ENCODE measurements at regions of chr17 and their contacts with region 1.

Region 1: GRCh38 chr17:43673516-43674323 is 12.0 kb upstream of the MEOX1 start:
- H3K4me3 ChIP-seq: no peak overlapping the region
- H3K27ac ChIP-seq: no peak overlapping the region
- H3K4me1 ChIP-seq: peaks cover 38% of the 10 kb centered on the region
- CTCF ChIP-seq: peak; percentile 60; the same call in 1 of the 2 replicates

Region 2: DNA sequence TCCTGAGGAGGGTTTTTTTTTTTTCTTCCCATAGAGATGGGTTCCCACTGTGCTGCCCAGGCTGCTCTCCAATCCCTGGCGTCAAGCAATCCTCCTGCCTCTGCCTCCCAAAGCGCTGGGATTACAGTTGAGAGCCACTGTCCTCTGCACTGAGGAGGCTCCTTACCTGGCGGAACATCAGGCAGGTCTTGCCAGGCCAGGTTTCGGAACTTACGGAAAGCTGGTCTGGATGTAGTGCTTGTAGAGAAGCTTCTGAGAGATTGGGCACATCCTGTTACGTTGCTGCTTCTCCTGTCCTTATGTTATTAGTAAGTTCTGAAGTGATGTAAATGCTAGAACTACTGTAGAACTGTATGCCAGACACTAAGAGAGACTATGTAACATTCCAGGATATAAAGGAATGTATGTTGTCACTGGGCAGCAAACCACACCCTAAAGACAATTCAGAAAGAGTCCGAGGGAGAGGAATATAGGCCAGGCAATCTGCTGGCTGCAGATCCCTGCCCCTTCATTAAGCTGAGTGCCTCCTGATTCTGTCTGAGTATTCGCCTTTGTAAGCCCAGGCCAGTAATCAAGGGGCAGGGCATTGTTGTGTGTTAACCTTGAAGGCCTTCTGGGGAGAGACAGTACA is 148.7 kb before region 1 on chr17:
- CTCF ChIA-PET with region 1: interaction called, 28 read pairs
- POLR2A ChIA-PET with region 1: no interaction called
- H3K4me3 ChIP-seq: no peak overlapping the region
- H3K27ac ChIP-seq: no peak overlapping the region
- H3K4me1 ChIP-seq: peaks cover 3% of the 10 kb centered on the region; the same call in 1 of the 2 replicates
- CTCF ChIP-seq: no peak

Region 3: GRCh38 chr17:43591779-43592562 is 81.7 kb before region 1 on chr17:
- CTCF ChIA-PET with region 1: interaction called, 20 read pairs
- POLR2A ChIA-PET with region 1: interaction called, 5 read pairs
- H3K4me3 ChIP-seq: no peak overlapping the region
- H3K27ac ChIP-seq: peak overlapping the region; percentile 22; the same call in 1 of the 2 replicates
- H3K4me1 ChIP-seq: peaks cover 10% of the 10 kb centered on the region
- CTCF ChIP-seq: no peak

Region 4: DNA sequence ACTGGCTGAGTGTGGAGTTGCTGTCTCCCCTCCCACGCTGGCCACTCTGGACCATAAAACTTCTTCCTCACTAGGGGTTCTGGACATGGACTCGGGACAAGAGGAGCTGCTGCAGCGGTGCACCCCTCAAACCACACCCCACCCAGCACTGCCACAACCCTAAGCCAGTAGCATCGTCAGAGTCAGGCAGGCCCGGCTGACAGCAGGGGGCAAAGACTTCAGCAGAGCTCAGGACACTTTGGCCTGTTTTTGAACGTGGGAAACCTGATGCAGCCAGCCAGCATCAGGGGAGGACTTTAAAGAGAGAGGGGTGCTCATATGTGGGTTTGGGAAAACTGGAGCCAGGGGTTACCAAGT is 21.6 kb before region 1 on chr17:
- CTCF ChIA-PET with region 1: interaction called, 10 read pairs
- POLR2A ChIA-PET with region 1: no interaction called
- H3K4me3 ChIP-seq: no peak overlapping the region
- H3K27ac ChIP-seq: no peak overlapping the region
- H3K4me1 ChIP-seq: peaks cover 16% of the 10 kb centered on the region
- CTCF ChIP-seq: no peak

Region 5: DNA sequence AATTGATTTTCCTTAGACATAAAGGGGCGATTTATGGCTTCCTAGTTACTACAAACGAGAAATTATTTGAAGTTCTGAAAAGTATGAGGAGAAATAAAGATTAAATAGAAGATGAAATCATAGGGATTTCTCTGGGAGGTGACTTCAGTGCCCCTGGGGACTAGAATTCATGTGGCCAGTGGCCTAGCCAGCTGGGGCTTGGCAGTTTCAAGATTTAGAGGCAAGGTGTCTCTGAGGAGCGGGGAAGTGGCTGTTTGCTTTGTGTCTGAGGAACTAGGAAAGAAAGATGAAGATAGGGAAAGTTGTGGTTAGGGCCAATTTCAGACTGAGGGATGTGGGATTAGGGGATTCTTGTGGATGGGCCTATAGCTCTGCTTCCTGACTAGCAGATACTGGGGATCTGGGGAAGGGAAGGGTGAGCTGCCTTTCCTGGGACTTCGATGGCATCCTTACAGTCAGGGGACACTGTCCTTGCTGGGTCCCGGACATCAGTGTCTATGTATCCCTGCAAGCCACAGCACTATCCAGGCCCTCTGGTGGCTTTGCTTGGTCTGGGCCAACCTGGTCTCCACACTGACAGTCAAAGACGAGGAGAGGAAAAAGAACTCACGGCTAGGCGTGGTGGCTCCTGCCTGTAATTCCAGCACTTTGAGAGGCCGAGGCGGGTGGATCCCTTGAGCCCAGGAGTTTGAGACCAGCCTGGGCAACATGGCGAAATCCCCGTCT is 10.4 kb after region 1 on chr17:
- CTCF ChIA-PET with region 1: interaction called, 26 read pairs
- POLR2A ChIA-PET with region 1: no interaction called
- H3K4me3 ChIP-seq: no peak overlapping the region
- H3K27ac ChIP-seq: no peak overlapping the region
- H3K4me1 ChIP-seq: no peaks in the 10 kb centered on the region
- CTCF ChIP-seq: no peak

Region 6: GRCh38 chr17:43784628-43785101 is 110.9 kb after region 1 on chr17:
- CTCF ChIA-PET with region 1: no interaction called
- POLR2A ChIA-PET with region 1: no interaction called
- H3K4me3 ChIP-seq: no peak overlapping the region
- H3K27ac ChIP-seq: no peak overlapping the region
- H3K4me1 ChIP-seq: no peaks in the 10 kb centered on the region
- CTCF ChIP-seq: no peak

Measured in HEK293 (cell line).